ENCODE measurements at regions of chr1 and their contacts with region 1.

Region 1: DNA sequence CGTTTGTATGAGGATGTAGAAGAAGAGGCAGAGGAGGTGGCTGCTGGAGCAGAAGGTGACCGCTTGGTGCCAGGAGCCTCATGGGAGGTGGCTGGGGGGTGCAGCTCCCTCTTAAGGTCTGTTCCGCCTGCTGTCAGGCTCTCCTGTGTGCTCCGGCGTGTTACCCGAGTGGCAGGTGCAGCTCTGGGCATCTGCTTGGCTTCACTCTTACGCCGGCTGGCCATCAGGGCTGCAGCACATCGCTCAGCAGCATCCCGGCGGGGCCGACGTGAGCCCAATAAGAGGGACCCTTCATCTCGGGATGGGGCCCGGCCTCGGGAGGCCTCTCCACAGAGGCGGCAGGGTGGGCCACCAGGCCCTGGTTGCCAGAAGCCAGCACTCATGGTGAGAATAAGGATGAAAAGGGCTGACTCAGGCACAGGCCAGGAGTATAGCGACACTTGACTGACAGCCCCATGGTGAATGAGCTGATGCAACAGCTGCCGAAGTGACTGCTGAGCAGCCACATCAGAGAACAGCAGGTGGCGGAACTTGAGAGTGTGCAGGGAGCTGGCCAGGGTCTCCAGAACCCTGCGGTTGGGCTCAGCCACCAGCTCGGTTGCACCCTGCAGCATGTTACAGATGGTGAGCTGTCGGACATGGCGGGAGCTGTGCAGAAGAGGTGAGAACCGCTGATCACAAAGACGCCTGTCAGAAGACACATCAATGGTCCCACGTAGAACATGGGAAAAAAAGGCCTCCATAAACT is 17.5 kb downstream of the LRRC41 start:
- DNase-seq: no peak
- ATAC-seq: no peak; the same call in 1 of the 2 replicates
- H3K4me3 ChIP-seq: no peak overlapping the region
- H3K27ac ChIP-seq: no peak overlapping the region
- H3K4me1 ChIP-seq: no peaks in the 10 kb centered on the region
- H3K27me3 ChIP-seq: no peaks in the 10 kb centered on the region
- CTCF ChIP-seq: no peak

Region 2: GRCh38 chr1:46262508-46262907 is 23.4 kb before region 1 on chr1:
- CTCF ChIA-PET with region 1: no interaction called
- POLR2A ChIA-PET with region 1: interaction called, 11 read pairs
- in situ Hi-C with region 1: no loop called
- intact Hi-C with region 1: no loop called
- DNase-seq: no peak
- ATAC-seq: no peak
- H3K4me3 ChIP-seq: no peak overlapping the region
- H3K27ac ChIP-seq: no peak overlapping the region
- H3K4me1 ChIP-seq: no peaks in the 10 kb centered on the region
- H3K27me3 ChIP-seq: no peaks in the 10 kb centered on the region
- CTCF ChIP-seq: no peak

Region 3: GRCh38 chr1:46544561-46545240 is 258.8 kb after region 1 on chr1:
- CTCF ChIA-PET with region 1: no interaction called
- POLR2A ChIA-PET with region 1: interaction called, 13 read pairs
- in situ Hi-C with region 1: no loop called
- intact Hi-C with region 1: no loop called
- DNase-seq: no peak
- ATAC-seq: no peak
- H3K4me3 ChIP-seq: no peak overlapping the region
- H3K27ac ChIP-seq: no peak overlapping the region
- H3K4me1 ChIP-seq: no peaks in the 10 kb centered on the region
- H3K27me3 ChIP-seq: no peaks in the 10 kb centered on the region
- CTCF ChIP-seq: no peak